Right cardiac atrium (tissue), 5 donors: ENCODE measurements at regions of chr1 and their contacts with region 1.

Region 1: DNA sequence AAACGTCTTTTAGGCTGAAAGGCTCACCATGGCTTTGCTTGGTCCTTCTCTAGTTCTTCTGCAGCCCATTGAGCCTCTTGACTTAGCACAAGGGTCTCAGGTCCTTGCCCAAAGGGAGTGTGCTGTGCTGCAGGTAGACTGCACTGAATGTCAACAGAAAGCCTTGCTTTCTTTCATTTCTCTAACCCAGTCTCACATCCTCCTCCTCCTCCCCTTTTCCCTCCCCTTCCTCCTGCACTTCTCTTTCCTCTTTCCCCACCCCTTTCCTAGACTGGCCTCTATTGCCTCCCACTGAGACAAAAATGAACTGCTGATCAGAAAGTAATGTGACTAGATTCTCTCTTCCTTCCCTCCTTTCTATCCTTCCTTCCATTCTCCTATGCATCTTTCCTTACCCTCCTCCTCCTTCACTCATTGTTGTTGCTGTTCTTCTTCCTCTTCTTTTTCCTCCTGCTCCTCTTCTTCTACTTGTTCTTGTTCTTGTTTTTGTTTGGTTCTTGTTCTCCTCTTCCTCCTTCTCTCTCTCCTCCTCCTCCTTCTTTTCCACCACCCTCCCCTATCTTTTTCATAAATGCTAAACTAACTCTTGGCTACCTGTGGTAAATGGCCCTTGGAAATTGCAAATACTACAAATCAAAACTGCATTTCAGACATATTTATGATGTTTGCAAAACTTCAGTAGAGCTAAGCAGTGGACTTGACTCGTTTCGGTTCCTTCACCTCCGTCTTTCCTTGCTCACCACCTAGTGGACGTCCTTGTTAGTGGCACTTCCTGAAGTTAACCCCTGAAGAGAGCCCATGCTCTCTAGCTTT is at the start of gene SELL:
- DNase-seq: peak; percentile 39 to 52 (median 51)
- ATAC-seq: peak; percentile 92 to 97
- H3K4me3 ChIP-seq: peak within 1 kb of the TSS; percentile 35
- H3K27ac ChIP-seq: no peak within 1 kb of the TSS
- H3K4me1 ChIP-seq: no peaks in the 10 kb centered on the region
- H3K27me3 ChIP-seq: no peaks in the 10 kb centered on the region
- total RNA-seq, gene SELL: 1.1 to 3.8 (median 1.2) TPM

Region 2: GRCh38 chr1:169546087-169546995 is 165.3 kb before region 1 on chr1:
- intact Hi-C with region 1: loop called in 1 of 4 experiments (anchors 5 kb)
- DNase-seq: peak in 2 of 3 donors; percentile 18 to 53
- ATAC-seq: peak; percentile 85 to 86
- H3K4me3 ChIP-seq: no peak overlapping the region
- H3K27ac ChIP-seq: no peak overlapping the region
- H3K4me1 ChIP-seq: no peaks in the 10 kb centered on the region
- H3K27me3 ChIP-seq: no peaks in the 10 kb centered on the region

Region 3: DNA sequence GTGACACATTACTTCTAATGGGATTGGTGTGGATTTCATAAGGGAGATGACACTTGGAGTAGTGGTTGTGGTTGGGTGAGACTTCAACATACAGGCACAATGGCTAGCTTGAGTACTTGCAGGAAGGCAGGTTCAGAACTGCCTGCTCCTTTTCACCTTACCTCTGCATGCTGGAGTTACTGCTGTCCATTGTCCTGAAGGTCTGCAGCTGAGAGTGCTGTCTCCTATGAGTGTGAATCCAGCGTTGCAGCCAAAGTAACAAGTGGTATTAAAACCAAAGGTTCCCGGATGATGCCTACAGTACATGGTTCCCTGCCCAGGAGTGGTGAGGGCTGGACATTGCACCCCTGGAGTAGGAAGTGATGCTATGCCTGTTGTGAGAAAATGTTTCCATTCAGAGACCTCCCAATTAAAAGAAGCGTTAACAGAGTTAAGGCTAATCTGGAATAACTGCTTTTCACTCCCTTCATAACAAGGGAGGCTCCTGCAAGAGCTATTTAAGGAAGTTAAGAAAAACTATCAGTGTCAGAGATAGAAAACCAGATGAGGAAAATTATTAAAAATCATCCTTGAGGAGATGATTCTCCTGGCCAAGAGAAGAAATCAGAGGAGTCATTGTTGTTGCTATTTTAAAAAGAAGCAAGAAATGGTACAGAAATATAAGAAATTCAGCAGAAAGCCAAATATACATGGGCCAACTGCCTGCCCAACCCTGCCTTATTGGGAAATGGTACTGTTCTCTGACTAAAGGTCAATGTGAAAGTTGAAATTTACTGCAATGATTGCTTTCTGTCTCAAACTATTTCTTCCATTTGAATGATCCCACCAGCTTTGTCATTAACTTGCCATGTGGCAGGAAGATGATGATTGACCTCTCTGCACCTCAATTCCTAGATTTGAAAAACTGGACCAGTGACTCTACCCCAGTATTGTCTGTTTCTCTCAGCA is 115.6 kb before region 1 on chr1:
- intact Hi-C with region 1: loop called in 3 of 4 experiments (anchors 2 to 10 kb)
- DNase-seq: peak in 1 of 3 donors; percentile 18
- ATAC-seq: peak in 1 of 2 donors; percentile 47
- H3K4me3 ChIP-seq: no peak overlapping the region
- H3K27ac ChIP-seq: no peak overlapping the region
- H3K4me1 ChIP-seq: no peaks in the 10 kb centered on the region
- H3K27me3 ChIP-seq: no peaks in the 10 kb centered on the region

Region 4: DNA sequence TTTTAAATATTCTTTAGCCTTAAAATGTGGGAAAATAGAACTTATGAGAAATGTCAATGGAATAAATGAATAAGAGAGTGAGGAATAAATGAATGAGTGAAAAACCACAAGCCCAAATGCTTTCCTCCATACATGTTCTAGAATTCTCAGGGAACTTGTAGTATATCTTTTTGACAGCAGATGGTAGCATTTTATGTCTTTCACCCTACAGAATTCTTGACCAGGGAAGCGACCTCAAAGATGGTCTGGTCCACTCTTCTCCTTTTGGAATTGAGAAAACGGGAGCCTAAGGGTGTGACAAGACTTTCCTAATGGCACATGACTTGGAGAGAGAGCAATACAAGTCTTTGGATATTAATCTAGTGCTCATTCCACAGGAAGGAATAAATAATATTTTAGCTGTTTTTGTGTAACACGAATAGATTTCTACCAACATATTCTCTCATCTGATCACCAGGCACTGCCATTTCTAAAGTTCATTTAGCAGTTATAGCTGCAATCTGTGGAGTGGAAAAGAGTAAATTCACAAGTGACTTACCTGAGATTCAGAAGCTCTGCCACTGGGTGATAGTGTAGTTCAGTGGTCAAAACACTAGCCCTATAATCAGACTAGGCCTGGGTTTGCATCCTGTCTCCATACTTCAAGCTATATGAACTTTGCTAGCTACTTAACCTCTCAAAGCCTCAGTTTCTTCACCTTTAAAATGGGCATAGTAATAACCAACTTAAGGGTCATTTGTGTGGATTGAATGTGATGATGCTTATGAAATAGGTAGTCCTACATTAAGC is 110.4 kb before region 1 on chr1:
- intact Hi-C with region 1: loop called in 3 of 4 experiments (anchors 2 to 10 kb)
- DNase-seq: no peak
- ATAC-seq: peak in 1 of 2 donors; percentile 37
- H3K4me3 ChIP-seq: no peak overlapping the region
- H3K27ac ChIP-seq: no peak overlapping the region
- H3K4me1 ChIP-seq: no peaks in the 10 kb centered on the region
- H3K27me3 ChIP-seq: no peaks in the 10 kb centered on the region

Region 5: DNA sequence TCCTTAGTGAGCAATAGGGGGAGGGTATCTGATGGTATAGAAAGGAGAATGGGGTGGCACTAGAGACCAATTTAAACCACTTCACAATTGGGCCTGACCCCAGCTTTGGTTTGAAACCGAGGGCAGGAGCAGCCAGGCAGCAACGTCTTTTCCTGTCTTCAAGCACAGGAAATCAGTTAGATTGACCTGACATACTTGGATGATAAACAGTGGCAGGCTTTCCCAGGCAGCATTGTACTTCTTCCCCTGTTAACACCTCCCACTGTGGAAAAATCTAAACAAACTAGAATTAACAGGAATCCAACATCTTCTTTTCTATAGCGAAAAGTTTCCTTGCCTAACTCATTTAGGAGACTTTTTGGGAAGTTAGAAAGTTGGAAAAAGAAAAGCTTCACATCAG is 40.8 kb before region 1 on chr1:
- intact Hi-C with region 1: no loop called
- DNase-seq: no peak
- ATAC-seq: peak; percentile 56 to 91
- H3K4me3 ChIP-seq: no peak overlapping the region
- H3K27ac ChIP-seq: no peak overlapping the region
- H3K4me1 ChIP-seq: no peaks in the 10 kb centered on the region
- H3K27me3 ChIP-seq: no peaks in the 10 kb centered on the region

Region 6: GRCh38 chr1:169724168-169724567 is 12.5 kb after region 1 on chr1:
- intact Hi-C with region 1: no loop called
- DNase-seq: no peak
- ATAC-seq: no peak
- H3K4me3 ChIP-seq: no peak overlapping the region
- H3K27ac ChIP-seq: no peak overlapping the region
- H3K4me1 ChIP-seq: no peaks in the 10 kb centered on the region
- H3K27me3 ChIP-seq: no peaks in the 10 kb centered on the region

Region 7: DNA sequence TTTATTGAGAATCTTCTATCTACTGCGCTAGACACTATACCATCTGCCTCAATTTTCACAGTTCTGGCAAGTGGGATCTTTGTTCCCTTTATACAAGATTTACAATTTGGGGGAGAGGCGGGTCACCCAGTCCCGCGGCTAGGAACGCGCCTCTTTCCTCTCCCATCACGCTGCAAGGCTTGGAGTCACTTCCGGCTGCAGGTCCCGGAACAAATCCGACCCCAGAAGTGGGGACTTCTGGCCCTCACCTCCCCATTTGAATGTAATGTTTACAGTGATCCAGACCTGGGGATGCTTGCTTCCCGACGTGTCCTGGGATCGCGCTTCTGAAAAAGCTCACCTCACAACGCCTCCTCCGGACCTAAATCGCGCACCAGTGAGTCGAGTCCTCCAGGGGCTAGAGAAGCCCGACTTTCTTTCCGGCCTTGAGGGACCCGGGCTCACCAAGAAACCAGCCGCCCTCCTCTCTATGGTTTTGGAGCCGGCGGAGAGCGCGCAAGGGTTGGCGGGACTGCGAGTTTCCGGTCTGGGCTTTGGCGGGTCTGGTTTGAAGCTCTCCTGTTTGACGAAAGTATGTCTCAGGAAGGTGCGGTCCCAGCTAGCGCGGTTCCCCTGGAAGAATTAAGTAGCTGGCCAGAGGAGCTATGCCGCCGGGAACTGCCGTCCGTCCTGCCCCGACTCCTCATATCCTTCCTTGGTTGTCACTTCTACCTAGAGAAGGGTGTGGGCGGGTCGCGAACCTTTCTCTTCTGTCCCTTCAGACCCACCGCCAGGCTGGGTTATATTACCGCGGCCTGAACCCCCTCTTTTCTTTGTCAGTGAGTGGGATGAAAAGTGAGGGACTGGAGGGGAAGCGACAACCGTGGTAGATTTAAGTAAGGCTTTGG is 83.1 kb after region 1 on chr1 and contains the start of gene METTL18:
- intact Hi-C with region 1: loop called in 1 of 4 experiments (anchors 10 kb)
- DNase-seq: peak; percentile 92 to 96 (median 95)
- ATAC-seq: peak; percentile 100
- H3K4me3 ChIP-seq: peak within 1 kb of the TSS; percentile 97
- H3K27ac ChIP-seq: peak within 1 kb of the TSS; percentile 100
- H3K4me1 ChIP-seq: peaks cover 2% of the 10 kb centered on the region
- H3K27me3 ChIP-seq: no peaks in the 10 kb centered on the region
- total RNA-seq, gene METTL18: 5.7 to 7.1 (median 6.4) TPM